Activated T-helper 1 cell treated with anti-CD3 and anti-CD28 coated beads, Interleukin-12 subunit alpha, Interleukin-12 subunit beta, Interleukin-2, Interleukin-4 antibody, amounts not matched to agents 30 ng/mL and 10 ng/mL and 1 ng/mL, durations not matched to agents 14 hours and 24 hours and 36 hours (primary cell): ENCODE measurements at regions of chr2 and their contacts with region 1.

Region 1: DNA sequence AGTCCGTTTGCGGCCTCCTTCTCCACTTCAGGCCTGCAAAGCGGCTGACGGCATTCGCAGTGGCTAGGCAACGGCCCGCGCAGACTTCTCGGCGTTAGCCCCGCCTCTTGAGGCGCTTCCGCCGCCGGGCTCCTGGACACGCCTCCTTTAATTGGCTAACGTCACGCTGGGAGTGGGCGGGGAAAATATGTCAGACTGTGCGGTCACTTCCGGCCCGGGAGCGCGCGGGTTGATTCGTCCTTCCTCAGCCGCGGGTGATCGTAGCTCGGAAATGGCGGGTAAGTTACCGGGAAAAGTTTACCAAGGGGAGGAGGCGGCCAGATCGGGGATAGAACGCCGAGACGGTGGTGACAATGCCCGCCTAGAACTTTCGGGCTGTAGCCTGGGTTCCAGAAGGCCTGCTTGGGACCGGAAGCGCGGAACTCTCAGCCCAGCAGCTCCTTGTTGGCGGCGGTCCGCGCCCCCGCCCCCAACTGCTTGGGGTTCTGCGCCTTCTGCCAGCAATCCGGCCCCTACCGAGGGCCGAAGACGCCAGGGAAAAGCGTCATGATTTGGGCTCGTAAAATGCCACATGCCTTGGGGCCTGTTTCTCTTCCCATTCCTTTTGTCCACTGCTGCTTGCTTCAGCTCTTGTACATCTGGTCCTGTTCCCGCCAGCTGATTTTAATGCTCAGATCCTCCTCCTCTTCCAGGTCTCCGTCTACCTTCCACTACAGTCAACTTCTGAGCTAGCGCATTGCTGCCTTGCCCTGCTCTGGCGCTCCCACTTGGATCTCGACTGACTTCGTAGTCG is at the start of gene HAT1:
- DNase-seq: peak; percentile 97
- H3K4me3 Mint-ChIP-seq: peak within 1 kb of the TSS; percentile 98
- H3K27ac Mint-ChIP-seq: peak within 1 kb of the TSS; percentile 98
- H3K4me1 Mint-ChIP-seq: peaks cover 36% of the 10 kb centered on the region
- H3K27me3 Mint-ChIP-seq: peaks cover 2% of the 10 kb centered on the region
- total RNA-seq, gene HAT1: 68.2 and 73.1 TPM in 2 replicates

Region 2: DNA sequence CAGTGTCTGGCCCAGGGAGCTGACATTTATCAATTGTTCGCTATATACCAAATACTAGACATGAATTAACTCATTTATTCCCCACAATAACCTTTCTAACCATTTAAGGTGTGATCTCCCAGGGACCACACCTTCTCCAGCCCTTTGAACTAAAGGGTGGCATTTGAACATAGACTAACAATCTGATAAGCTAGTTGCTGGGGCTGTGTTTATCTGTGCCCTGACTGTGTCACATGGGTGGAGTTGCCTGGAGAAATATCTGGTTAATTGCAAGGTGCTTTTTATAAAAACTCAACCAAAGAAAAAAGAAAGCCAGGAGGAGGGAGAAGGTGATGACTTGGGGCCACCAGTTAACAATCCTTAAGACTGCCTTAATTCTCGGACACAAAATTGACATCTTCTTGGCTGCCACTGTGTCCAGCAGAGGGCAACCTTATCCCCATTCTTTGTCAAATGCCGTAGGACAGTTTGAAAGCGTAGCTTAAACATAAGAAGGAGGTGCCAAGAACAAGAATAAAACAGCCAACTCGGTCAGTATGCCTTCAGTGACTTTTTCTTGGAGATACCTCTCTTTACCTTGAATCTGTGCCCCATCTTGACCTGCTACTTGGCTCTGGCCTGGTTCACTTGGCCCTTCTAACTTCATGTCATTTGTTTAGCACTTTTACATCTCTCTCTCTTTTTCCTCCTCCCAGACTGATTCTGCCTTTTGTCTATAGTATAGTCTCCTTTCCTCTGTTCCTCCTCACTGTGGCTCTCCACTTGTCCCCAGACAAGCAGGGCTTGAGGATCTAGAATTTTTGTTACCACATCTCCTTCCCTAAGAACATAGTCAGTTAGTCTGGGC is 1561.1 kb before region 1 on chr2:
- intact Hi-C with region 1: loop called (anchors 10 kb)
- DNase-seq: peak; percentile 39
- H3K4me3 Mint-ChIP-seq: no peak overlapping the region
- H3K27ac Mint-ChIP-seq: peak overlapping the region; percentile 94
- H3K4me1 Mint-ChIP-seq: peaks cover 33% of the 10 kb centered on the region
- H3K27me3 Mint-ChIP-seq: peaks cover 2% of the 10 kb centered on the region

Region 3: DNA sequence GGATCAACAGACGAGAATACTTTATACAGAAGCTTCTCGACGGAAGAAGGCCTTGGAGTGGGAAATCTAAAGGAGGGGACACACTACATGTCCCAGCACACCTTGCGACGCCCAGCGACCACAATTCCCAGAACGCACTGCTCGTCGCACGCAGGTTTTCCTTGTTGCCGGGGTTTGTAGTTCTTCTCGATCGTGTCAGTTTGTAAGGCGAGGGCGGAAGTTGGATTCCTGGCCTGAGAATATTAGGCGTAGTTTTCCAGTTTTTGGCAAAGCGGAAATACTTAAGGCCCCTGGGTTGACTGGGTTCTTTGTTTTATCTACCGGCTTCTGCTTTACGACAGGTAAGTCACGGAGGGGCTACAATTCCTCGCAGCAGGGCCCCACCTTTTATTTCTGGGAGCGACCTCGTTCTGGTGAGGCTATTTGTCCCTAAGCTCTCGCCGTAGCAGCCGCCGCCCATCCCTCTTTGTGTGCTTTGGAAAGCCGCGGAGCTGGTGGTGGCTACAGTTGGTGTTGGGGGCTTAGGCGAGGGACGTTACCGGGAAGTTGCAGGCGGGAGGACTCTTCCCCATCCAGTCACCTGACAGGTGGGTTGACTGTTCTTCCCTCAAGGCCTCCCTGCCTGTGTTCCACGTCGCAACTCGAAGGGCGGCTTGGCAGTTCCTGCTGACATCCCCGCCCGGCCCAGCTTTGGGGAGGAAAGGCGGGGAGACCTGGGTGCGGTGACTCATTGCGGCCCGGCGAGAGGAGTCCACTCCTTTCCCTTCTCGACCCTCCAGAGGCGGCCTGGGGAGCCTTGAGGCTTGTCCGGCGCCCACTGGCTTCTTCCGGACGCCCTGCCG is 234.9 kb before region 1 on chr2 and contains the start of gene DYNC1I2:
- intact Hi-C with region 1: loop called (anchors 1 kb)
- DNase-seq: peak; percentile 63
- H3K4me3 Mint-ChIP-seq: peak within 1 kb of the TSS; percentile 85
- H3K27ac Mint-ChIP-seq: peak within 1 kb of the TSS; percentile 84
- H3K4me1 Mint-ChIP-seq: peaks cover 20% of the 10 kb centered on the region
- H3K27me3 Mint-ChIP-seq: peaks cover 10% of the 10 kb centered on the region
- total RNA-seq, gene DYNC1I2: 49.3 and 49.4 TPM in 2 replicates

Region 4: DNA sequence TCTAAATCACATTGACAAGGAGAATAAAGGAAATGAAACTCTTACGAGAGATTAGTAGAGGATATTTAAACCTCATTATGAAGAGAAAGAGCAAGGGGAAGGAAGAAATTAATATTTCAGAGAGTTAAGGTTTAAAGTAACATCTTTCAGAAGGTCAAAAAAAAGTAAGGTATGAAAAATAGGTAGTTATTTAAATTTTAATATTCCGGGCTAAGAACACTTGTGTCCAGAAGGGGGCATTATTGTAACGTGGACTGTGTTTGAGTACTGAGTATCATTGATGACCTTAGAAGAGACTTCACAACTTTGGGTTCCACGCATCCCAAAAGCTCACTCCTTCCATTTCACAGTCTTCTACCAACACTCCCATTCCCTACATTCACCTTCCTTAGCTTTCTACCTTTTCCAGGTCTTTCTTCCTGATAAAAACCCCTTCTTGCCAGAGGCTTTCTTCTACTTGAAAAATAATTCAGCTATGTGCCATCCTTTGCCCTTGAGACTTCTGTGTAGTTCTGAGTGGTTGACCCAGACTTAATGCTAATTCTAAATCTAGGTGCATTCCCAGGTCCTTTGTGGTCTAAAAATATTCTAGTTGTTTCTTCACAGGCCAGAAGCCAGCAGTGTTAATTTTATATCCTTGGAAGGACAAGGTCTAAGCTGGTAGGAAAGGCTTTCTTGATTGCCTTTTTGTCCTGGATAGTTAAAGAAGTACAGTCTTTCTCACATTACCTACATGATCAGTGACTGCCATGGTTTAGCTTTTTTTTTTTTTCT is 218.7 kb before region 1 on chr2:
- intact Hi-C with region 1: loop called (anchors 5 kb)
- DNase-seq: no peak
- H3K4me3 Mint-ChIP-seq: no peak overlapping the region
- H3K27ac Mint-ChIP-seq: no peak overlapping the region
- H3K4me1 Mint-ChIP-seq: peaks cover 12% of the 10 kb centered on the region
- H3K27me3 Mint-ChIP-seq: no peaks in the 10 kb centered on the region

Region 5: DNA sequence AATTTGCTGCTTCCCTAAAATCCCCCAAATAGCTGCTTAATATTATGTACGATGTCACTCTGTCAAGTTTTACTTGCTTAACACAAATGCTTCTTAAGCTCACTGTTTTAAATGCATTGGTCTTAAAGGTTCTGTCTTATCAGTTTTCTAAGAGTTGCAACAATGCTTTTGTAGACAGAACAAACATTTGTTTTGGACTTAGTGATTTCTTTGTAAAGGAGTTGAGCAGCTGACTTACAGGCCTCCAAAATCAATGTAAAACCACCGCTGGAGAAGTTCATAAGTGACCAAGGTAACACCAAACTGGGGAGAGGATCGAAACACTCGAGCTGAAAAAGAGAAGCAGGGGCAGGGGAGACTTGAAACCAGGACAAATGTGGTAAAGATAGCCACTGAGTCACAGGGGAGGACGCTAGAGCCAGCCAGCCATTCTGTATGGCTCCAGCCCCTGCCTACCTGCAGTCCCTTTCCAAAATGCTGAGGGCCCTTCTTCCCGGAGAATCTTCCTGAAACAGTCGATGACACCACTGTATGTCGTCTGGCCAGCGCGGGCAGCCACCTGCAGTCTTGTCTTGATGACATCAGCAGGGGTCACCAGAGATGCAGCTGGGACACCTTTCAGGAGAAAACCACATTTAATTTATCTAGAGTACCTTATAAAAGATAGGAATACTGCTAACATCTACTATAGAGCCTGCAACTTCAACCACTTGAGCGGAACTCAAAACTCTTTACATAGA is 134.9 kb before region 1 on chr2:
- intact Hi-C with region 1: no loop called
- DNase-seq: no peak
- H3K4me3 Mint-ChIP-seq: no peak overlapping the region
- H3K27ac Mint-ChIP-seq: peak overlapping the region; percentile 20
- H3K4me1 Mint-ChIP-seq: no peaks in the 10 kb centered on the region
- H3K27me3 Mint-ChIP-seq: no peaks in the 10 kb centered on the region

Region 6: DNA sequence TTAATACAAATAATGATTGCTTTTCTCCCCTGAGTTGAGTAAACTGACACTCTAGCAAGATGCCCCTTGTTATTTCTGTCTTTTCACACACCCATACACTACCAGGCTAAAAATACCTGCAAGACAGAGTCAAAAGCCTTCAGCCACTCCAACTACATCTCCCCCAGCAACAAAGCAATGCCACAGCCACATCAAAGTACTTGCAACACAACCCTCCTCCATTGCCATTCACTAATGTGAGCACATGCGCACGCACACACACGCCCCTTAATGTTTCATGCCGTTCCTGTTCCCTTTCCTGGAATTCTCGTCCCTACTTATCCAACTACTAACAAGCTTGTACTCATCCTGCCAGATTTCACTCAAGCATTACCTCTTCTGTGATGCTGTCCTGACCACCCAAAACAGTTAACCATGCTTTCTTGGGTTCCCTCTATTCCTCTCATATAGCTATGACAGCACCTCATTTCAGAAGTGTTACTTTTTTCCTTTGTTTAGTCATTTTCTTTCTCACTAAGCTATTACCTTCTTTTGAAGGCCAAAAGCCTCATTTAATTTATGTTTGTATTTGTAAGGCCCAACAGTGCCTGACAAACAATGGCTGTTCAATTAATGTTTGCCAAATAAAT is 58.0 kb before region 1 on chr2:
- intact Hi-C with region 1: no loop called
- DNase-seq: no peak
- H3K4me3 Mint-ChIP-seq: no peak overlapping the region
- H3K27ac Mint-ChIP-seq: peak overlapping the region; percentile 5
- H3K4me1 Mint-ChIP-seq: peaks cover 8% of the 10 kb centered on the region
- H3K27me3 Mint-ChIP-seq: no peaks in the 10 kb centered on the region

Region 7: DNA sequence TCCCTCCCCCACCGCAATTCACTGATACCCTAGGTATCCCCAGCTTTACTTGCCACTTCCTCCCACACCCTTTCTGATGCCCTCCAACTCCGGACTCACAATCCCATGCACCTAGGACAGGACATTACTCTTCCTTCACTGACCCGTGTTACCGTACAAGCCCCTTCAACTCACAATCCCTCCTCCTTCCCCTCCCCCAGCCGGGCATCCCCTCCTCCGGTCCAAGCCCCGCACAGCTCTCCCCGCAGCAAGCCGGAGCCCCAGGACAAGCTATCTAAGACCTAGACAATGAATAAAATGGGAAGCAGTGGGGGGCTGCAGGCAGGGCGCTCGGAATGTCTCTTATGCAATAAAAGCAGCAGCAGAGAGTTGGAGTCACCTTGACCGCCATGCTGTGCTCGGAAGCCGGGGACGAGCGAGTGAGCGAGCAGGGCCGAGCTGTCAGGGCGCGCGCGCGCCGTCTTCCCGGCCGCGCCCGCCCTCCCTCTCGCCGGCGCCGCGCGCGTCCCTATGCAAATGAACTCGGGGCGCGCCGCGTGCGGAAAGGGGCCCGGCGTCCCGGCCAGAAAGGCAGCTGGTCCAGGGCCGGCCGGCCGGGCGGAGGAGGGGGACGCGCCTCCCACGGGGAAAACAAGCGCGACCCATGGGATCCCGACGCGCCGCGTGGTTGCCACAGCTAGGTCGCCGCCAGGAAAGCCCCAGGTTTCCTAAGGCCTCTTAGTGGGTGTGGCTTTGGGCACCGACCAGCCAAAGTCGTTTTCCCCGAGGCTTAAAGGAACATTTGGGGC is 28.4 kb before region 1 on chr2 and contains the start of gene SLC25A12:
- intact Hi-C with region 1: loop called (anchors 1 kb)
- DNase-seq: peak; percentile 71
- H3K4me3 Mint-ChIP-seq: peak within 1 kb of the TSS; percentile 98
- H3K27ac Mint-ChIP-seq: peak within 1 kb of the TSS; percentile 90
- H3K4me1 Mint-ChIP-seq: peaks cover 57% of the 10 kb centered on the region
- H3K27me3 Mint-ChIP-seq: peaks cover 7% of the 10 kb centered on the region
- total RNA-seq, gene SLC25A12: 34.6 and 35.0 TPM in 2 replicates

Region 8: GRCh38 chr2:171999604-172000469 is 77.4 kb after region 1 on chr2 and contains the start of gene METAP1D:
- intact Hi-C with region 1: loop called (anchors 1 kb)
- DNase-seq: peak; percentile 88
- H3K4me3 Mint-ChIP-seq: peak within 1 kb of the TSS; percentile 98
- H3K27ac Mint-ChIP-seq: peak within 1 kb of the TSS; percentile 96
- H3K4me1 Mint-ChIP-seq: peaks cover 19% of the 10 kb centered on the region
- H3K27me3 Mint-ChIP-seq: peaks cover 5% of the 10 kb centered on the region
- total RNA-seq, gene METAP1D: 5.4 and 6.4 TPM in 2 replicates

Region 9: GRCh38 chr2:172021955-172022354 is 99.5 kb after region 1 on chr2:
- intact Hi-C with region 1: no loop called
- DNase-seq: no peak
- H3K4me3 Mint-ChIP-seq: no peak overlapping the region
- H3K27ac Mint-ChIP-seq: no peak overlapping the region
- H3K4me1 Mint-ChIP-seq: peaks cover 5% of the 10 kb centered on the region
- H3K27me3 Mint-ChIP-seq: peaks cover 4% of the 10 kb centered on the region

Region 10: DNA sequence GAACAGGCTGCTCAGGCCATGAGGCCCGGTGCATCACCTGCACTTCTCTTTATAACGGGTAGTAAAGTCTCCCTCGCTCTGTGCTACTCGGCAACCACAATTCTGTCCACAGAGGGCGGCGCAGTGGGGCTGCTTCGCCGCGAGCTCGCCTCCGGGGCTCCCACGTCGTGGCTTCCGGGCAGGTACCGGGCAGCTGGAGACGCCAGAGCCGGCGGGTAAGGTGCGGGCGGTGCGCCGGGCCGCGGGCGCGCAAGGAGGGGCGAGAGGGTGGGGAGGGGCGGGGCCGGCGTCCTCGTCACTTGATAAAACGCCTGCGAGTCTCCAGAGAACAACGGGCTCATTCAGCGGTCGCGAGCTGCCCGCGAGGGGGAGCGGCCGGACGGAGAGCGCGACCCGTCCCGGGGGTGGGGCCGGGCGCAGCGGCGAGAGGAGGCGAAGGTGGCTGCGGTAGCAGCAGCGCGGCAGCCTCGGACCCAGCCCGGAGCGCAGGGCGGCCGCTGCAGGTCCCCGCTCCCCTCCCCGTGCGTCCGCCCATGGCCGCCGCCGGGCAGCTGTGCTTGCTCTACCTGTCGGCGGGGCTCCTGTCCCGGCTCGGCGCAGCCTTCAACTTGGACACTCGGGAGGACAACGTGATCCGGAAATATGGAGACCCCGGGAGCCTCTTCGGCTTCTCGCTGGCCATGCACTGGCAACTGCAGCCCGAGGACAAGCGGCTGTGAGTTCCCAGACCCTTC is 505.0 kb after region 1 on chr2 and contains the start of gene ITGA6:
- intact Hi-C with region 1: loop called (anchors 2 kb)
- DNase-seq: peak; percentile 66
- H3K4me3 Mint-ChIP-seq: peak within 1 kb of the TSS; percentile 85
- H3K27ac Mint-ChIP-seq: peak within 1 kb of the TSS; percentile 70
- H3K4me1 Mint-ChIP-seq: peaks cover 45% of the 10 kb centered on the region
- H3K27me3 Mint-ChIP-seq: peaks cover 34% of the 10 kb centered on the region
- total RNA-seq, gene ITGA6: 1.9 TPM in 2 replicates